HepG2 (cell line): ENCODE measurements at regions of chr4 and their contacts with region 1.

Region 1: GRCh38 chr4:15001869-15002658 is at the start of gene CPEB2:
- DNase-seq: peak; percentile 86
- ATAC-seq: peak; percentile 84
- H3K4me3 ChIP-seq: peak within 1 kb of the TSS; percentile 81 to 97 (median 97)
- H3K27ac ChIP-seq: peak within 1 kb of the TSS; percentile 97
- H3K4me1 ChIP-seq: peaks cover 13% of the 10 kb centered on the region
- H3K27me3 ChIP-seq: no peaks in the 10 kb centered on the region; a peak in 2 of 5 replicates
- CTCF ChIP-seq: 0 out of 2 replicates have a peak, but pooled peaks have one; percentile 1
- EP300 ChIP-seq: 0 out of 4 replicates have a peak, but pooled peaks of 1 of the 2 experiments have one; percentile 6
- POLR2A ChIP-seq: peak in 1 of 2 experiments; percentile 85; a peak in 2 of 4 replicates
- RAD21 ChIP-seq: peak; percentile 16
- total RNA-seq, gene CPEB2: 2.5 and 3.7 TPM in 2 replicates

Region 2: DNA sequence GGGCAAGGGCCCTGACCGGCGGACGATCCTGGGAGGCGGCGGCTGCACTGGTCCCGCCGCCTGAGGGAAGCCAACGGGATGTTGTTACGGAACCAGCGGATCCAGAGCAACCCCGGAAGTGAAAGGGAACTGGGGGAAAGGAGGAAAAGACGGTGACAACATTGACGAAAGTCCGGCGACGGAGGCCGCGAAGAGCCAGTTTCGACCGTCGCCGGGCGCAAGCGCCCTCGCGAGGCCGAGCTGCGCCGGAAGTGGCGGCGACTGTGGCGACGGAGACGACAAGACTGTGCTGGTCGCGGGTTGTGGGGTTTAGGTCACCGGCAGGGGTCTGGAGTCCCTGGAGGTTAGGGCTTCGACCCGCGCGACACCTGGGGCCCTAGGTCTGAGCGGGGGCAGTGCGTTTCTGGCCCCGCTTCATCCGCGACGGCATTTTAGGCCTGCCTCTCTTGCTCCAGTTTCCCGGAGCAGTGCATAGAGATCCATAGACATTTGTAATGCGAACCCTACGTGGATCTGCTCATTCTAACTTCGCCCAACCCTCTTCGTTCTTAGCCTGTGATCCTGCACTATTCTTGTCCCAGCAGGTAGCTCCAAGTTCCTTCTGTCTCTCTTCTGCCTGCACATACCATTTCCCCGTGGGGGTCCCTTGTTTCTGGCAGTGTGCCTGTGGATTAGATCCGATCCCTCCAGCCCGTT is 1374.3 kb before region 1 on chr4 and contains the start of gene BOD1L1:
- CTCF ChIA-PET with region 1: no interaction called
- POLR2A ChIA-PET with region 1: no interaction called
- in situ Hi-C with region 1: loop called (anchors 25 kb)
- intact Hi-C with region 1: loop called (anchors 10 kb)
- DNase-seq: peak; percentile 90
- ATAC-seq: peak; percentile 96
- H3K4me3 ChIP-seq: peak within 1 kb of the TSS; percentile 78 to 97 (median 91)
- H3K27ac ChIP-seq: peak within 1 kb of the TSS; percentile 78
- H3K4me1 ChIP-seq: peaks cover 22% of the 10 kb centered on the region
- H3K27me3 ChIP-seq: no peaks in the 10 kb centered on the region; a peak in 1 of 5 replicates
- CTCF ChIP-seq: peak; percentile 83
- EP300 ChIP-seq: peak; percentile 18 to 59; a peak in 1 of 4 replicates
- POLR2A ChIP-seq: peak; percentile 81 to 84
- RAD21 ChIP-seq: no peak
- total RNA-seq, gene BOD1L1: 17.9 and 22.7 TPM in 2 replicates

Region 3: GRCh38 chr4:15043226-15043625 is 41.2 kb after region 1 on chr4:
- CTCF ChIA-PET with region 1: no interaction called
- POLR2A ChIA-PET with region 1: no interaction called
- in situ Hi-C with region 1: no loop called
- intact Hi-C with region 1: loop called (anchors 2 kb)
- DNase-seq: peak; percentile 24
- ATAC-seq: peak; percentile 69; the same call in 2 of the 3 replicates
- H3K4me3 ChIP-seq: no peak overlapping the region
- H3K27ac ChIP-seq: no peak overlapping the region
- H3K4me1 ChIP-seq: no peaks in the 10 kb centered on the region
- H3K27me3 ChIP-seq: no peaks in the 10 kb centered on the region
- CTCF ChIP-seq: peak; percentile 52
- EP300 ChIP-seq: no peak
- POLR2A ChIP-seq: no peak
- RAD21 ChIP-seq: no peak

Region 4: DNA sequence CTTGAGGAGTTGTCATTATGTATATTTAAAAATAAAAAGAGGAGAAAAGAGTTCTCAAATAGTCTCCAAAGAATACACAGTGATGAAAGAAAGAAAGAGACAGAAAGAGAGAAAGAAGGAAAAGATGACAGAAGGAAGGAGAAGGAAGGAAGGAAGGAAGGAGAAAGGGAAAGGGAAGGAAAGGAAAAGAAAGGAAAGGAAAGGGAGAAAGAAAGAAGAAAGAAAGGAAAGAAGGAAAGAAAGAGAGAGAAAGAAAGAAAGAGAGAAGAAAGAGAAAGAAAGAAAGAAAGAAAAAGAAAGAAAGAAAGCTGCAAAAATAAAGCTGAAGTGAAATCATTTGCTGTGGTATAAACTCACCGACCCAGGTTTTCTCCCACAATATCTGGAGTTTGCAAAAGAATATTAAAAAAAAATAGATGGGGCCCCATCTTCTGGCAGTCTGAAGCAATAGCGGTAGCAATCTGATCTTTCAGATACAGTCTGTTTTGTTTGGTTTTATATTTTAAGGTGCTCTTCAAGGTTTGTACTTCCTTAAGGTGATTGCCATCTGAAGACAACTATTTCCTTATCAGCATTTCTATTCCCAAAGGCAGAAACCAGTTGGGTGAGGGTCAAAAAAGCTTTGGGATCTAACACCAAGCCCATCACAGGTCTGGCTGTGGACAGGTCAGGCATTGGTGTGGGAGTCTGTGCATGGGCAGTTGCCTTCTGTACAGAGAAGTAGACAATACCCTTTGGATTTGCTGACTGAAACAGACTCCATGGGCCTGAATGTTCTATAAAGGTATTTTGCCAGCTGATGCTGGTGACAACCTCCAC is 160.6 kb after region 1 on chr4:
- CTCF ChIA-PET with region 1: no interaction called
- POLR2A ChIA-PET with region 1: no interaction called
- in situ Hi-C with region 1: no loop called
- intact Hi-C with region 1: loop called (anchors 1 kb)
- DNase-seq: peak; percentile 15
- ATAC-seq: peak; percentile 54; the same call in 2 of the 3 replicates
- H3K4me3 ChIP-seq: no peak overlapping the region
- H3K27ac ChIP-seq: no peak overlapping the region
- H3K4me1 ChIP-seq: peaks cover 17% of the 10 kb centered on the region
- H3K27me3 ChIP-seq: no peaks in the 10 kb centered on the region
- CTCF ChIP-seq: peak; percentile 17; the same call in 1 of the 2 replicates
- EP300 ChIP-seq: no peak
- POLR2A ChIP-seq: no peak
- RAD21 ChIP-seq: no peak

Region 5: GRCh38 chr4:15681207-15682015 is 679.3 kb after region 1 on chr4 and contains the start of gene FAM200B:
- CTCF ChIA-PET with region 1: no interaction called
- POLR2A ChIA-PET with region 1: no interaction called
- in situ Hi-C with region 1: no loop called
- intact Hi-C with region 1: loop called (anchors 10 kb)
- DNase-seq: peak; percentile 97
- ATAC-seq: peak; percentile 95
- H3K4me3 ChIP-seq: peak within 1 kb of the TSS; percentile 83 to 92 (median 90)
- H3K27ac ChIP-seq: peak within 1 kb of the TSS; percentile 94
- H3K4me1 ChIP-seq: peaks cover 65% of the 10 kb centered on the region
- H3K27me3 ChIP-seq: no peaks in the 10 kb centered on the region; a peak in 1 of 5 replicates
- CTCF ChIP-seq: peak; percentile 7; the same call in 1 of the 2 replicates
- EP300 ChIP-seq: peak in 1 of 2 experiments; percentile 48; a peak in 1 of 4 replicates
- POLR2A ChIP-seq: peak; percentile 86 to 88
- RAD21 ChIP-seq: peak; percentile 51
- total RNA-seq, gene FAM200B: 41.8 and 48.4 TPM in 2 replicates